ENCODE measurements at regions of chr13 and their contacts with region 1.

Region 1: DNA sequence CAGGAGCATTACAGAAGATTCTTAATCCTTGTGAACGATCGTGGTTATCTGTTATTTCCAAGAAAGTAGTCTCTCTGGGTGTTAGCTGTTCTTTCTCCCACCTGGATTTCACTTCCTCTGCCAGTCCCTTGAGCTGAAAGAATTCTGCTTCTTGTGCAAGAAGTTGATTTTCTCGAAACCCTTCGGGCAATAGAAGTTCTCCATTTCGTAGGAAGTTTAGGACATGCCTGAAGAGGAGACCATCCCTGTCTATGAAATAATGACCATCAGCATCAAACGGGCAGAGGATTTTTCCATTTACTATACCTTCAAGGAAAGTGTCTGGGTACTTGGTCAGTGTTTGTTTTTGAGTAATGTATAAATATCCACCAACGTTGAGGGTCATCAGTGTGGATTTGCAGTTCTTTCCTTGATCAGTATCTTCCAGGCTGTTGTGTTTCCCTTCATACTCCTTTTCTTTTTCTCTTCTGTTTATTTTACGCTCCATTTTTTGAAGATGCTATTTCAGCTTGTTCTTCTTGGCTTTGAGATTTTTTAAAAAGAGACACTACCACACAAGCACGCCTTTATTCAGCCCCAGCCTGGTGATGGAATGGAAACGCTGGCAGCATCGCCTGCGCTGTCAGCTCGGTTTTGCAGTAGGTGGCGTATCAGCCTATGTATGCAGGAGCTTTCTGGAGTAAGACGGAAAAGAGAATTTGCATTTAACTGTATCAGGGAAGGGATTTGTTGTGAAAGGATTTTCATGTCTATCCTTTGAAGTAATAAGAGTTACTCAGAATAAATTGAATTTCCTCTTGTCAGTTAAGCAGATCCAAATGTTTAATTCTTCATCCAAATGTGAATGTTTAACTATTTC is 6.5 kb downstream of the KCTD4 start:
- DNase-seq: peak; percentile 78
- H3K4me3 Mint-ChIP-seq: peak overlapping the region; percentile 72
- H3K27ac Mint-ChIP-seq: peak overlapping the region; percentile 75
- H3K4me1 Mint-ChIP-seq: peaks cover 24% of the 10 kb centered on the region
- H3K27me3 Mint-ChIP-seq: no peaks in the 10 kb centered on the region
- CTCF ChIP-seq: peak; percentile 69

Region 2: GRCh38 chr13:45119991-45120864 is 74.1 kb before region 1 on chr13 and contains the start of gene GTF2F2:
- CTCF ChIA-PET with region 1: no interaction called
- POLR2A ChIA-PET with region 1: interaction called, 77 read pairs
- intact Hi-C with region 1: loop called (anchors 2 kb)
- DNase-seq: peak; percentile 85
- H3K4me3 Mint-ChIP-seq: no peak within 1 kb of the TSS
- H3K27ac Mint-ChIP-seq: no peak within 1 kb of the TSS
- H3K4me1 Mint-ChIP-seq: peaks cover 8% of the 10 kb centered on the region
- H3K27me3 Mint-ChIP-seq: no peaks in the 10 kb centered on the region
- CTCF ChIP-seq: no peak
- total RNA-seq, gene GTF2F2: 41.2 and 47.4 TPM in 2 replicates

Region 3: GRCh38 chr13:45162821-45163220 is 31.5 kb before region 1 on chr13:
- CTCF ChIA-PET with region 1: interaction called, 14 read pairs
- POLR2A ChIA-PET with region 1: interaction called, 98 read pairs
- intact Hi-C with region 1: loop called (anchors 1 kb)
- DNase-seq: peak; percentile 92
- H3K4me3 Mint-ChIP-seq: peak overlapping the region; percentile 35
- H3K27ac Mint-ChIP-seq: peak overlapping the region; percentile 91
- H3K4me1 Mint-ChIP-seq: peaks cover 9% of the 10 kb centered on the region
- H3K27me3 Mint-ChIP-seq: no peaks in the 10 kb centered on the region
- CTCF ChIP-seq: no peak

Region 4: GRCh38 chr13:45206340-45206739 is 12.0 kb after region 1 on chr13:
- CTCF ChIA-PET with region 1: interaction called, 20 read pairs
- POLR2A ChIA-PET with region 1: interaction called, 153 read pairs
- intact Hi-C with region 1: no loop called
- DNase-seq: peak; percentile 88
- H3K4me3 Mint-ChIP-seq: peak overlapping the region; percentile 56
- H3K27ac Mint-ChIP-seq: peak overlapping the region; percentile 88
- H3K4me1 Mint-ChIP-seq: peaks cover 47% of the 10 kb centered on the region
- H3K27me3 Mint-ChIP-seq: no peaks in the 10 kb centered on the region
- CTCF ChIP-seq: no peak

Region 5: DNA sequence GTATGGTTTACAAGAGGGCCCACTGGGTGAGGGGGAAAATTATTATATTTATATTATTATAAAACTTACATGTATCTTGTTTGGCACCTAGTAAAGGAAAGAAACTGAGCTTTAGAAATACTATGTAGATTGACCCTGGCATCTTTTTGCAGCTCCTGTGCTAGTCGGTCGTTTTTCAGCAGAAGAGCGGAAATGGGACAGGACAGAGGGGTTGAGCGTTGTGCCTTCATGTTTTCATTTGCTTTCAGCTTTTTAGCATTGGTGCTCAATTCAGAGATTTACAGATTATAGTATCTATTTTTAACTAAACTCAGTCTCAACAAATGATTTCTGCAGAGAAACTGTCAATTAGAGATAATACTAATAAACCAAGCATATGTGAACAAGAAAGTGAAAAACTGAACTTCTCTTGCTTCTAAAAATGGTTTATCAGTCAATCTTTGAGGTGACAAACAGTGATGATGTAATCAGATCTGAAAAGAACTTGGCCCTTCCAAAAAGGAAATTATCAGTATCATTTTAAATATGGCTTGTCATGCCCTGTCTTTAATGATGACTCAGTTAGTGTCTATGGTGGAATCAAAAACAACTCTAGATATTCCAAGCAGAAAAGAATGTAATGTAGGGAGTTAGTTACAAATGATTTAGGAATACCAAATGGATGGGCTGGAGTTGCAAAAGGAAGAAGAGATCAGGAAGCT is 63.5 kb after region 1 on chr13:
- CTCF ChIA-PET with region 1: interaction called, 3 read pairs
- POLR2A ChIA-PET with region 1: interaction called, 4 read pairs
- intact Hi-C with region 1: loop called (anchors 1 kb)
- DNase-seq: no peak
- H3K4me3 Mint-ChIP-seq: no peak overlapping the region
- H3K27ac Mint-ChIP-seq: no peak overlapping the region
- H3K4me1 Mint-ChIP-seq: peaks cover 22% of the 10 kb centered on the region
- H3K27me3 Mint-ChIP-seq: no peaks in the 10 kb centered on the region
- CTCF ChIP-seq: no peak

Region 6: GRCh38 chr13:45310341-45311125 is 116.2 kb after region 1 on chr13:
- CTCF ChIA-PET with region 1: interaction called, 7 read pairs
- POLR2A ChIA-PET with region 1: no interaction called
- intact Hi-C with region 1: loop called (anchors 1 kb)
- DNase-seq: no peak
- H3K4me3 Mint-ChIP-seq: peak overlapping the region; percentile 6
- H3K27ac Mint-ChIP-seq: no peak overlapping the region
- H3K4me1 Mint-ChIP-seq: peaks cover 10% of the 10 kb centered on the region
- H3K27me3 Mint-ChIP-seq: no peaks in the 10 kb centered on the region
- CTCF ChIP-seq: no peak